ENCODE measurements at regions of chr2 and their contacts with region 1.

Region 1: DNA sequence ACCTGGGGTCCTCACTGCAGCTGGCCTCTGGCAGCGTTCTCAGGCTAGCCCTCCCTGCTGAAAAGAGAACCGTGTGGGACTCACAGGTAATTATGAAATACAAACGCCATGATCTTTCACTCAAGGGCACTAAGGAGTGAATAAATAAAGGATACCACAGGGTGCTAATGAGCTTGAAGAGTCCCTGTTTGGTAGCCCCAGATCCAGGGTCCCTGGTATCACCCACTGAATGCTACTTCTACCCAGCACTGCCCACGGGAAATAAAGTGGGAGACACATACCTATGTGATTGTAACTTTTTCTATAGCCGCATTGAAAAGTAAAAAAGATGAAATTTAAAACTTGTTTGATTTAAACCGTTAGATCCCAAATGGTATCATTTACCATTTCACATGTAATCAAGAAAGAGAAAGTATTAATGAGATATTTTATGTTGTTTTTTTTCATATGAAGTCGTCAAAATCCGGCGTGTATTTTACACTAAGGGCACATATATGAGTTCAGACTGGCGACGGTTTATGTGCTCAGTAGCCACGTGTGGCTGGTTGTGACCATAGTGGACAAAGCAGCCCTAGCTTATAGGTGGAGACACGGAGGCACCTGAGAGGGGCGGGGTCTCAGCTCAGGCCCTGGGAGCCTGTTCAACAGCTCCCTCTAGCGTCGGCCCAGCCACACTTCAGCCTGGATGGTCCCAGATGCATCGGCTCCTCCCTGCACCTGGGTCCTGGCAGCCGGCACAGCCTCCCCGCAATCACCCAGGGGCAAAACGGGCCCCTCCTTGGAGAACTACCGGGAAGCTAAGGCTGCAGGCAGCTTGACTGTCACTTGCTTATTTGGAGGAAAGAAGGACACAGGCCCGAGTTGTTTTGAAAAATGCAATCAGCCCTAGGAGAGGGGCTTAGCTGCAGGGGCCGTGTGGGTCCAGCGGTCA is 39.2 kb downstream of the ODC1 start:
- DNase-seq: peak; percentile 87
- ATAC-seq: peak; percentile 85
- H3K4me3 Mint-ChIP-seq: peak overlapping the region; percentile 74
- H3K27ac Mint-ChIP-seq: peak overlapping the region; percentile 91
- H3K4me1 Mint-ChIP-seq: peaks cover 39% of the 10 kb centered on the region
- H3K27me3 Mint-ChIP-seq: no peaks in the 10 kb centered on the region

Region 2: DNA sequence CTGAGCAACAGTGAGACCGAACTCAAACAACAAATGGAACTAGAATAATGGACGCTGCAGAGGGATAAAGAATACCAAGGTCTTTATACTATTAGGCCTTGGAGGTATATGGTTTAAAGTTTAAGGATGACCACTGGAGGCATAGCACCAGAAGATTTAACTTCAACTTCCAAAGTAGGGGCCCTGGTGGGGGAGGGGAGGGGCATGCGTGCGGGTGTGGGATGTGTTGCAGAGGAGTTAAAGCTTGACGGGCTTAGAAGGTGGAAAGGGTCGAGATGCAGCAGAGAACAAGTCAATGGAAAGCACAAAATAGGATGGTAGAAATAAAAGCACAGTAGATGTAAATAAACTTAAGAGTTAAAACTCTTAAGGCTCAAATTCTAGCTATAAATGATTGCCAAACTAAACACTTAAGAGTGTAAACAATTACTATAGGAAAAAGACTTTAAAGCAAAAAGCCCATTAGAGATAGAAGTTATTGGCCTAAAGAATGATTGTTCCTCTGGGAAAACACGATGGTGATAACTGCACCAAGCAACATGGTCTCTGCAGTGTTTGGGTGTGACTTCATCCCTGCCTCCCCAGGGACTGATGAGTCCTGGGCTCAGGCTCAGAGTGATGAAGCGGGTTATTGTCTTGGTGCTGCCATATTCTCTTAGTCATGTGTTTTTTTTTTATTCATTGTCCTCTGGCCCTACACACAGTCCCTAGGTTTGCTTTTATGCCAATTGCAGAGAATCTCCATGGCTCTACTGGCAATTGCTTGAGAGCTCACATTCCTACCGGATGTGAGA is 273.4 kb before region 1 on chr2:
- CTCF ChIA-PET with region 1: interaction called, 139 read pairs
- POLR2A ChIA-PET with region 1: interaction called, 4 read pairs
- DNase-seq: no peak
- ATAC-seq: no peak
- H3K4me3 Mint-ChIP-seq: no peak overlapping the region
- H3K27ac Mint-ChIP-seq: peak overlapping the region; percentile 67
- H3K4me1 Mint-ChIP-seq: peaks cover 42% of the 10 kb centered on the region
- H3K27me3 Mint-ChIP-seq: no peaks in the 10 kb centered on the region

Region 3: GRCh38 chr2:10228611-10229365 is 180.1 kb before region 1 on chr2:
- CTCF ChIA-PET with region 1: interaction called, 10 read pairs
- POLR2A ChIA-PET with region 1: no interaction called
- DNase-seq: no peak
- ATAC-seq: no peak
- H3K4me3 Mint-ChIP-seq: no peak overlapping the region
- H3K27ac Mint-ChIP-seq: no peak overlapping the region
- H3K4me1 Mint-ChIP-seq: no peaks in the 10 kb centered on the region
- H3K27me3 Mint-ChIP-seq: no peaks in the 10 kb centered on the region

Region 4: GRCh38 chr2:10296127-10296526 is 112.8 kb before region 1 on chr2:
- CTCF ChIA-PET with region 1: interaction called, 105 read pairs
- POLR2A ChIA-PET with region 1: interaction called, 5 read pairs
- DNase-seq: no peak
- ATAC-seq: no peak
- H3K4me3 Mint-ChIP-seq: no peak overlapping the region
- H3K27ac Mint-ChIP-seq: no peak overlapping the region
- H3K4me1 Mint-ChIP-seq: peaks cover 36% of the 10 kb centered on the region
- H3K27me3 Mint-ChIP-seq: peaks cover 2% of the 10 kb centered on the region

Region 5: GRCh38 chr2:10382354-10383061 is 26.4 kb before region 1 on chr2:
- CTCF ChIA-PET with region 1: interaction called, 43 read pairs
- POLR2A ChIA-PET with region 1: no interaction called
- DNase-seq: peak; percentile 60
- ATAC-seq: peak; percentile 72
- H3K4me3 Mint-ChIP-seq: peak overlapping the region; percentile 35
- H3K27ac Mint-ChIP-seq: peak overlapping the region; percentile 68
- H3K4me1 Mint-ChIP-seq: peaks cover 83% of the 10 kb centered on the region
- H3K27me3 Mint-ChIP-seq: no peaks in the 10 kb centered on the region

Region 6: DNA sequence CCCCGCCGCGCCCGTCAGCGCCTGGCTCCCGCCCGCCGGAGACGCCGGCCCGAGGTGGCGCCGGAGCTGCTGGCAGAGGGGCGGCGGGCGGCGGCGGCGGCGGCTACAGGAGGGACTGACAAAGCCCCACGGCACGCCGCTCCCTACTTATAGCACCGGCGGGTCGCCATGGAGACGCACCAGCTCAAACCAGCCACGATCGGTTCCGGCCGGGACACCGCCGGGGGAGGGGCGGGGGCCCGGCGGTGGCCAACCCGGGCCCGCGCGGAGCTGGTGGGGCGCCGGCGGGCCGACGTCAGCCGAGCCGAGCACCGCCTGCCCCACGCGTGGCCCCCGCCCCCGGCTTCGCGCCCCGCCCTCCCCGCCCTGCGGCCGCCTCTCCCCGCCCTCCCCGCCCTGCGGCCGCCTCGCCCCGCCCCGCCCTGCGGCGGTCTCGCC is 39.3 kb after region 1 on chr2 and contains the start of gene ODC1:
- CTCF ChIA-PET with region 1: interaction called, 20 read pairs
- POLR2A ChIA-PET with region 1: no interaction called
- DNase-seq: peak; percentile 96
- ATAC-seq: peak; percentile 87
- H3K4me3 Mint-ChIP-seq: peak within 1 kb of the TSS; percentile 87
- H3K27ac Mint-ChIP-seq: peak within 1 kb of the TSS; percentile 91
- H3K4me1 Mint-ChIP-seq: peaks cover 44% of the 10 kb centered on the region
- H3K27me3 Mint-ChIP-seq: no peaks in the 10 kb centered on the region
- total RNA-seq, gene ODC1: 54.4 to 54.6 TPM

Region 7: GRCh38 chr2:10584796-10585475 is 176.0 kb after region 1 on chr2:
- CTCF ChIA-PET with region 1: no interaction called
- POLR2A ChIA-PET with region 1: no interaction called
- DNase-seq: no peak
- ATAC-seq: no peak
- H3K4me3 Mint-ChIP-seq: no peak overlapping the region
- H3K27ac Mint-ChIP-seq: no peak overlapping the region
- H3K4me1 Mint-ChIP-seq: peaks cover 2% of the 10 kb centered on the region
- H3K27me3 Mint-ChIP-seq: no peaks in the 10 kb centered on the region

Region 8: GRCh38 chr2:10629819-10630532 is 221.1 kb after region 1 on chr2:
- CTCF ChIA-PET with region 1: no interaction called
- POLR2A ChIA-PET with region 1: no interaction called
- DNase-seq: no peak
- ATAC-seq: no peak
- H3K4me3 Mint-ChIP-seq: no peak overlapping the region
- H3K27ac Mint-ChIP-seq: no peak overlapping the region
- H3K4me1 Mint-ChIP-seq: no peaks in the 10 kb centered on the region
- H3K27me3 Mint-ChIP-seq: no peaks in the 10 kb centered on the region

Measured in activated CD8-positive, alpha-beta T cell treated with anti-CD3 and anti-CD28 coated beads, Interleukin-2, amount 10 ng/mL, durations not matched to agents 7 days and 5 days (primary cell).